ENCODE measurements at regions of chr14 and their contacts with region 1.

Region 1: GRCh38 chr14:65429757-65430317 is 17.3 kb downstream of the FUT8 start:
- DNase-seq: no peak
- ATAC-seq: no peak
- H3K4me3 ChIP-seq: no peak overlapping the region
- H3K4me3 Mint-ChIP-seq: no peak overlapping the region
- H3K27ac ChIP-seq: no peak overlapping the region
- H3K27ac Mint-ChIP-seq: no peak overlapping the region
- H3K4me1 ChIP-seq: peaks cover 6 to 7% of the 10 kb centered on the region in 2 experiments
- H3K4me1 Mint-ChIP-seq: peaks cover 67 to 71% (median 68%) of the 10 kb centered on the region in 3 donors
- H3K27me3 ChIP-seq: no peaks in the 10 kb centered on the region
- H3K27me3 Mint-ChIP-seq: no peaks in the 10 kb centered on the region

Region 2: DNA sequence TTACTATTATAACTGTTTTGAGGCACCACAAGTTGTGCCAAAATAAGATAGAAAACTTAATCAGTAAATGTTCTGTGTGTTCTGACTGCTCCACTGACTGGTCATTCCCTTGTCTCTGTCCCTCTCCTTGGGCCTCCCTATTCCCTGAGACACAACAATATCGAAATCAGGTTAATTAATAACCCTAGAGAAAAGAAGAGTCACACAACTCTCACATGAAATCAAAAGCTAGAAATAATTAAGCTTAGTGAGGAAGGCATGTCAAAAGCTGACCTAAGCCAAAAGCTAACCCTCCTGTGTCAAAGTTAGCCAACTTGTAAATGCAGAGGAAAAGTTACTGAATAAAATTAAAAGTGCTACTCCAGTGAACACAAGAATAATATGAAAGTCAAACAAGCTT is 1002.5 kb after region 1 on chr14:
- CTCF ChIA-PET with region 1: interaction called in 1 of 2 experiments, 11 read pairs
- POLR2A ChIA-PET with region 1: no interaction called
- DNase-seq: no peak
- ATAC-seq: no peak
- H3K4me3 ChIP-seq: no peak overlapping the region
- H3K4me3 Mint-ChIP-seq: no peak overlapping the region
- H3K27ac ChIP-seq: no peak overlapping the region
- H3K27ac Mint-ChIP-seq: no peak overlapping the region
- H3K4me1 ChIP-seq: no peaks in the 10 kb centered on the region
- H3K4me1 Mint-ChIP-seq: no peaks in the 10 kb centered on the region
- H3K27me3 ChIP-seq: no peaks in the 10 kb centered on the region
- H3K27me3 Mint-ChIP-seq: no peaks in the 10 kb centered on the region

Measured in T-cell (primary cell).